ENCODE measurements at regions of chr11 and their contacts with region 1.

Region 1: DNA sequence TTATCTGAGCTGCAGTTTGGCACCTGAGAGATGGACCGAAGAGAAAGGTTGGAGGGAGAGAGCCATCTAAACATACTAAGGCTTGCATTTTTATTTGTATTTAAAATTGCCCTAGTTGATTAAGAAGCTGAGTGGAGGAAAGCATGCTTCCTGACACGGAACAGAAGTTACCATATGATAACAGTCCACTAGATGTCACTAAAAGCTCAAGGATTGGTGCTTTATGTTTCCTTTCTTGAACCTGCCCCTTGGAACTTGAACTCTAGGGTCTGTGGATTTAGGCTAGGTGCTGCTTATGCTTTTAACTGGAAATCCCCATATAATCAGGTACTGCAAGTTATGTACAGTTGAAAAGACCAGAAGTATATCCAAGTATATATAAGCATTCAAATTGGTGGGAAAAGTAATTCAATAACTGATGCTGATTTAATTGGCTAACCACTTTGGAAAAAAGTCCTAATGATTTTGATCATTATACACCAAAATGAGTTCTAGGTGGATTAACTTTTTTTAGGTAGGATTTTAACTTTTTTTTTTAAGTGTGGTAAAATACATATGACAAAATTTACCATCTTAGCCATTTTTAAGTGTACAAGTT is 9.5 kb downstream of the RBMXL2 start:
- DNase-seq: peak; percentile 63
- H3K4me3 Mint-ChIP-seq: no peak overlapping the region
- H3K27ac Mint-ChIP-seq: no peak overlapping the region
- H3K4me1 Mint-ChIP-seq: no peaks in the 10 kb centered on the region
- H3K27me3 Mint-ChIP-seq: peaks cover 84% of the 10 kb centered on the region
- CTCF ChIP-seq: peak; percentile 73

Region 2: DNA sequence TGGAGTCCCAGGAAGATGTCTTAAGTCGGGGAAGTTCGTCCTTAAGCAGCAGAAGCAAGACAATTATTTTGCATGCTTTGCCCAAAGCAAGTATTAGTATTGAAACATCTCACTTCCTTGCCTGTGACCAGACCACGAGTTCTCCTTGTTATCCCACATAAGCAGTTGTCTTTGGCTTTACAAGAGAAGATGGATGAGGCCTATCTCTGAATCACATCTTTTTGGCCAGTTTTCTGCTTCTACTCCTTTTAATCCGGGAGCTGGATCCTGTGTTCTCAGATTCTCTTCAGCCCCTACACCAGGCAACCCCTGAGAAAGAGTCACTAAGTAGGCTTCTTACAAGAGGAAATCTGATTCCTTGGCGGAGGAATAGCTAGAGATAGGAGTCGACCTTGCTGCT is 155.5 kb after region 1 on chr11:
- CTCF ChIA-PET with region 1: no interaction called
- POLR2A ChIA-PET with region 1: no interaction called
- intact Hi-C with region 1: no loop called
- DNase-seq: no peak
- H3K4me3 Mint-ChIP-seq: no peak overlapping the region
- H3K27ac Mint-ChIP-seq: no peak overlapping the region
- H3K4me1 Mint-ChIP-seq: no peaks in the 10 kb centered on the region
- H3K27me3 Mint-ChIP-seq: peaks cover 17% of the 10 kb centered on the region
- CTCF ChIP-seq: no peak

Region 3: GRCh38 chr11:7278314-7278917 is 180.1 kb after region 1 on chr11:
- CTCF ChIA-PET with region 1: interaction called, 4 read pairs
- POLR2A ChIA-PET with region 1: no interaction called
- intact Hi-C with region 1: loop called (anchors 2 kb)
- DNase-seq: peak; percentile 48
- H3K4me3 Mint-ChIP-seq: no peak overlapping the region
- H3K27ac Mint-ChIP-seq: no peak overlapping the region
- H3K4me1 Mint-ChIP-seq: peaks cover 9% of the 10 kb centered on the region
- H3K27me3 Mint-ChIP-seq: no peaks in the 10 kb centered on the region
- CTCF ChIP-seq: peak; percentile 42

Region 4: GRCh38 chr11:7353100-7353499 is 254.8 kb after region 1 on chr11:
- CTCF ChIA-PET with region 1: no interaction called
- POLR2A ChIA-PET with region 1: no interaction called
- intact Hi-C with region 1: loop called (anchors 5 kb)
- DNase-seq: peak; percentile 50
- H3K4me3 Mint-ChIP-seq: no peak overlapping the region
- H3K27ac Mint-ChIP-seq: no peak overlapping the region
- H3K4me1 Mint-ChIP-seq: peaks cover 9% of the 10 kb centered on the region
- H3K27me3 Mint-ChIP-seq: peaks cover 5% of the 10 kb centered on the region
- CTCF ChIP-seq: peak; percentile 42

Region 5: DNA sequence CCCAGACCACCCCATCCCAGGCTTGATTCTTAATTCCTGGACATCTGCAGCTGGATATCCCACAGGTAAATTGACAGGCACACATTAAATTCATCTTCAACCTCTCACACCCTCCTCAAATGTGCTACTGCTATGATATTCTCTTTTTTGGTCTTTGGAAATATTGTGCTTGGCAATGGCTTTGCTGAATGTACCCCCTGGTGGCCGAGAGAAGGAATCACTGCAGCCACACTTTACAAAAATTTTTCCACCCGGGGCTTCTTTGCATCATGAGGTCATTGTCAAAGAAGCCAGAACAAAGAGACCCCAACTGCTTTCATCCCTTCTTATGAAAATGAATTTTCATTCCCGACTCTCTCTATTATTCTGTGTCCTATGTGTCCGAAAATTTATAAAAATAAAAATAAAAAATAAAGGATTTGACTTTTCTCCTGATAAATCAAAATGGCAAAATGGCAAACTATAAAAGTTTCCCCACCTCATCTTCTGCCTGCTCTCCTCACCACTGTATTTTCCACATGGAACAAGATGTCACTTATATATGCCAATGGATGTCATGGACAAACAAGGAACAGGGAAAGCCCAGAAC is 590.0 kb after region 1 on chr11:
- CTCF ChIA-PET with region 1: interaction called, 13 read pairs
- POLR2A ChIA-PET with region 1: no interaction called
- intact Hi-C with region 1: loop called (anchors 1 kb)
- DNase-seq: peak; percentile 32
- H3K4me3 Mint-ChIP-seq: no peak overlapping the region
- H3K27ac Mint-ChIP-seq: no peak overlapping the region
- H3K4me1 Mint-ChIP-seq: peaks cover 13% of the 10 kb centered on the region
- H3K27me3 Mint-ChIP-seq: peaks cover 11% of the 10 kb centered on the region
- CTCF ChIP-seq: peak; percentile 62